IMR-90 (cell line): ENCODE measurements at regions of chr1 and their contacts with region 1.

Region 1: GRCh38 chr1:207885129-207886032 is 25.5 kb downstream of the CD34 start:
- DNase-seq: peak; percentile 83
- ATAC-seq: peak; percentile 99
- H3K4me3 ChIP-seq: no peak overlapping the region
- H3K27ac ChIP-seq: no peak overlapping the region
- H3K4me1 ChIP-seq: peaks cover 5% of the 10 kb centered on the region
- H3K27me3 ChIP-seq: peaks cover 6% of the 10 kb centered on the region; the same call in 1 of the 2 replicates
- CTCF ChIP-seq: peak; percentile 97
- POLR2A ChIP-seq: no peak
- RAD21 ChIP-seq: peak; percentile 94

Region 2: DNA sequence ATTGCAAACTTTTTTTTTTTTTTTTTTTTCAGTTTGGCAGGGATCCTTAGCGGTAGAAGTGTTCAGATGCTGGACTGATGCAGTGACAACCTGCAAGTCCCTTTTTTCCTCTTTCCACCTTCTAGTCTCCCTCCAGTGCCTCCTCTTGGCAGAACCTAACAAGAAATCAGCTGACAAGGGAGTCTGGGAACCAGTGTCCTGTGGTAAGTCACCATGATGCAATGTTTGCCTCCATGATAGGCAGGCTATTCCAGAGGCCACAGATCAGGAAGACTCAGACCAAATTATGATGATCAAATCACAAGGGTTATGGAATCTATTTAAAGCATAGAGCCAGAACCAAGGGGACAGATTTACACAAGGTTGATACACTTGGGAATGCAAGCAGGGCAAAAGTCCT is 28.6 kb after region 1 on chr1:
- CTCF ChIA-PET with region 1: no interaction called
- POLR2A ChIA-PET with region 1: no interaction called
- dilution Hi-C with region 1: no loop called
- in situ Hi-C with region 1: no loop called
- intact Hi-C with region 1: no loop called
- DNase-seq: no peak
- ATAC-seq: no peak
- H3K4me3 ChIP-seq: no peak overlapping the region
- H3K27ac ChIP-seq: no peak overlapping the region
- H3K4me1 ChIP-seq: no peaks in the 10 kb centered on the region
- H3K27me3 ChIP-seq: peaks cover 22% of the 10 kb centered on the region
- CTCF ChIP-seq: no peak
- POLR2A ChIP-seq: no peak
- RAD21 ChIP-seq: no peak

Region 3: GRCh38 chr1:207952617-207953542 is 67.5 kb after region 1 on chr1:
- CTCF ChIA-PET with region 1: interaction called, 12 read pairs
- POLR2A ChIA-PET with region 1: no interaction called
- dilution Hi-C with region 1: no loop called
- in situ Hi-C with region 1: loop called (anchors 5 kb)
- intact Hi-C with region 1: no loop called
- DNase-seq: no peak
- ATAC-seq: no peak
- H3K4me3 ChIP-seq: no peak overlapping the region
- H3K27ac ChIP-seq: no peak overlapping the region
- H3K4me1 ChIP-seq: no peaks in the 10 kb centered on the region
- H3K27me3 ChIP-seq: peaks cover 38% of the 10 kb centered on the region
- CTCF ChIP-seq: no peak
- POLR2A ChIP-seq: no peak
- RAD21 ChIP-seq: no peak

Region 4: DNA sequence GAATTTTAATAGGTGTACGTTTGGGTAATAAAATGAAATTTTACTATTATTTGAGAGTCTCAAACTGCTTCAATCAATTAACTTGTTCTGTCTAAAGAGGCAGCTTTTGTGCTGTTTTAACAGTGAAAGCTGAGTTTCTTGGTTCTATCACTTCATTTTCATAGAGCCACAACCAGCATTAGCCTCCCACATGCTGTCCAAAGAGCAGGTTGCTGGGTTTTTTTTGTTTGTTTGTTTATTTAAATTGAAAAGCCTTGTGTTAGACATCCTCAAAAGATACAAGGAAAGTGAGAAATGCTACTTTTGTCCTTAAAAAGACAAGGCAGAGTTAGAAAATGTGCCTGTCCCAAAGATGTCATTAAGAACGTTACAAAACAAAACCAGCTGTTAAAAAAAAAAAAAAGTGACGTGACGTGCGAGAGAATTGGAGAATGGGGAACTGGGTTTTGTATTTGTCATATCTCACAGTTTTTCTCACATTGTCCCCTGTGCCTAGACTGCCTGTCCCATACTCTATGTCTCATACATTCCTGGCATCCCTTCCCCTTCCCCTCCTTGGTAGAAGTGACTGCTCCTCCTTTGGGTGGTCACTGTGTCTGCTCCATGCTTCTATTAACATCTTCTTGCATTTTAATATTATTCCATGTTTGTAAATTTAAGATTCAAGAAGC is 88.7 kb after region 1 on chr1:
- CTCF ChIA-PET with region 1: interaction called, 18 read pairs
- POLR2A ChIA-PET with region 1: no interaction called
- dilution Hi-C with region 1: no loop called
- in situ Hi-C with region 1: no loop called
- intact Hi-C with region 1: no loop called
- DNase-seq: no peak
- ATAC-seq: no peak
- H3K4me3 ChIP-seq: no peak overlapping the region
- H3K27ac ChIP-seq: no peak overlapping the region
- H3K4me1 ChIP-seq: peaks cover 1% of the 10 kb centered on the region; the same call in 1 of the 2 replicates
- H3K27me3 ChIP-seq: peaks cover 22% of the 10 kb centered on the region
- CTCF ChIP-seq: no peak
- POLR2A ChIP-seq: no peak
- RAD21 ChIP-seq: no peak

Region 5: GRCh38 chr1:208093754-208094719 is 208.7 kb after region 1 on chr1:
- CTCF ChIA-PET with region 1: no interaction called
- POLR2A ChIA-PET with region 1: no interaction called
- dilution Hi-C with region 1: no loop called
- in situ Hi-C with region 1: no loop called
- intact Hi-C with region 1: loop called (anchors 10 kb)
- DNase-seq: peak; percentile 58
- ATAC-seq: peak; percentile 64
- H3K4me3 ChIP-seq: no peak overlapping the region
- H3K27ac ChIP-seq: no peak overlapping the region
- H3K4me1 ChIP-seq: peaks cover 7% of the 10 kb centered on the region; the same call in 1 of the 2 replicates
- H3K27me3 ChIP-seq: no peaks in the 10 kb centered on the region
- CTCF ChIP-seq: peak; percentile 60
- POLR2A ChIP-seq: no peak
- RAD21 ChIP-seq: peak; percentile 54